Dorsolateral prefrontal cortex (tissue), 120 donors: ENCODE measurements at regions of chr3 and their contacts with region 1.

Region 1: GRCh38 chr3:40179016-40179415 is 130.5 kb upstream of the EIF1B start:
- DNase-seq: peak; percentile 82 to 96 (median 86)
- H3K4me3 ChIP-seq: no peak overlapping the region
- H3K27ac ChIP-seq: peak overlapping the region in 54 of 59 donors; percentile 4 to 85 (median 64)
- H3K27me3 ChIP-seq: no peaks in the 10 kb centered on the region
- CTCF ChIP-seq: peak; percentile 66 to 97 (median 90)

Region 2: GRCh38 chr3:39541917-39542329 is 637.1 kb before region 1 on chr3:
- intact Hi-C with region 1: loop called (anchors 5 kb)
- DNase-seq: no peak
- H3K4me3 ChIP-seq: peak overlapping the region in 57 of 59 donors; percentile 1 to 63 (median 41)
- H3K27ac ChIP-seq: peak overlapping the region in 22 of 59 donors; percentile 2 to 63 (median 26)
- H3K27me3 ChIP-seq: no peaks in the 10 kb centered on the region
- CTCF ChIP-seq: peak; percentile 55 to 85 (median 72)

Region 3: DNA sequence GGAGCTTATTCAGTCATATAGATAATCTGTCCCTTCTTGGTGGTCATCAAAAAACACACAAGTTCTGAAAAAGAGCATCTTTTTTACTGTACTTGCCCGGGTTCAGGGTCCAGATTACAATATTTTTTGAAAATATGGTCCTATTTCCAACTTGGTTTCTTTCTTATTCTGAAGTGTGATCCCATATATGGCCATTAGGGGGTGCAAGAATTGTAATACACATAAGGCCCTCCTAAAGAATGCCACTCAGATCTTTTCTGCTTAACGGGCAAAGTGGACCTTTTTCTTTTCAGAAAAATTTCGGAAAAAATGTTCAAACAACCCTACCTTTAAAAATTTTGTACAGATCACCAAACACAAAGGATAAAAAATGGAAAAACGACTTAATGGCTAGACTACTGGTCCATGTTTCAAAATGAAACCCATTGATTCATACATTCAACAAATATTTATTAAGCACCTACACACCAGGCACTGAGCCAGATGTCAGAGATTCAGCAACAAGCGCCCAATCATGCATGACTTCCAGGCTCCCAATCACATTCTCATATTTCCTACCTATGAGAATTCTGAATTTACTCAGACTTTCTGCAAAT is 471.6 kb before region 1 on chr3:
- intact Hi-C with region 1: loop called in 1 of 2 experiments (anchors 5 kb)
- DNase-seq: no peak
- H3K4me3 ChIP-seq: no peak overlapping the region
- H3K27ac ChIP-seq: no peak overlapping the region
- H3K27me3 ChIP-seq: no peaks in the 10 kb centered on the region
- CTCF ChIP-seq: peak; percentile 51 to 85 (median 68)

Region 4: DNA sequence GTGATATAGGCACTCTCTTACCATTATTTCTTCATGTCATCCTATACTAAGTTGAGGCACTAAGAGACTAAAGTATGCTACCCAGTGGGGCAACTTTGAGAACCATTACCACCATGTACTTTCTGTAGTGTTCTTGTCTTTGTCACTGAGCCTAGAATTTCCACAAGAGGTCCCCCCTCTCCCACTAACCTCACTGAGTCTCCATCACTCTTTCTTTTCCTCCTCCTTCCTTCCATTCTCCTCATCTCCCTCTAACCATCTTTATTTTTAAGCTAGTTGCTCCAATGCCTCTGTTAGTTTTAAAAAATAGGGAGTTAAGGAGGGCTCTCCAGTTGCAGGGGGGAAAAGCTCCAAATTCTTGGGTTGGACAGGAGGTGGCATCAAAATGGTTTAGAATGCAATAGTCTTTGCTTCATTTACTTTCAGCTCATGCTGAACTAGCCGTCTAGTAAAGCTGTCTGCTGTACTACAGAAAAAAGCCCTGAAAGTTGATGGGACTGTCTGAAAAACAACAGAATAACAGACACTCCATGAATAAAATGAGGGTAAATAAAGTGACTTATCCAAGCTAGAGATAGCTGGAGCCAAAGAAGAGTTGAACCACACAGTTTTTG is 454.7 kb before region 1 on chr3:
- intact Hi-C with region 1: loop called (anchors 5 to 10 kb)
- DNase-seq: peak in 1 of 10 donors; percentile 11
- H3K4me3 ChIP-seq: no peak overlapping the region
- H3K27ac ChIP-seq: no peak overlapping the region
- H3K27me3 ChIP-seq: no peaks in the 10 kb centered on the region
- CTCF ChIP-seq: peak in 49 of 56 donors; percentile 11 to 73 (median 41)

Region 5: DNA sequence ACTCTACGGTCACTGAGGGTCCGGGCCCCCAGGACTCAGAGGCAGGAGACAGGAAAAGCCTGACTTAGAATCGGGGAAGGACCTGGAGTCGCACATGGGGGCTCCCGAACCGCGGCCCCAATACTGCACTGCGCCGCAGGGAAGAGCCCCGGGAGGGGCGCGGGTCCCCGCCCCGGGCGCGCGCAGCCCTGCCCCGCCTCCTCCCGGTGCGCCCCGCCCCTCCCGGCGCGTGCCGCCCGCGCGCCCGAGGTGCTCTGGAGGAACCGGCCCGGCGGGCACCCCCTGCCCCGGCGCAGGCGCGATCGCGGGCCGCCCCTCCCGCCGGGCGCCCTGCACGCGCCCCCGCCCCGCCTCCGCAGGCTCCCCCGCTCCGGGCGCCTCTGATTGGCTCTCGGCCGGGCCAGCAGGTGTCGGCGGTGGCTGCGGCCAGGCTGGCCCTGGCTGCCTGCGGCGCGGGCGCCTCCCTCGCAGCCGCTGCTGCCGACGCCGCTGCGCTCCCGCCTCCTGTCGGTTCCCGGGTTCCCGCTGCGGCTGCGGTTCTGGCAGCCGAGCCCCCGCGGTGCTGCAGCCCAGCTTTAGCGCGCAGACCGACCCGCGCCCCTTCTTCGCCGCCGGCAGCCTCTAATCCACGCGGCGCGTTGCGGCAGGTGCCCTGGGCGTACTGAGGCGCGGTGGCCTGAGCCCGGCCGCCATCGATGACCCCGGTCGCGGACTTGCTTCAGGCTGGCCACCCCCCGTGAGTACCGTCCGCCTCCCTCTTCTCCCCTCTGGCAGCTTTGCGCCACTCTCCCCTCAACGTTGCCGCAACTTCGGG is 369.6 kb before region 1 on chr3 and contains the start of gene MYRIP:
- intact Hi-C with region 1: loop called (anchors 5 kb)
- DNase-seq: peak; percentile 41 to 83 (median 65)
- H3K4me3 ChIP-seq: peak within 1 kb of the TSS; percentile 59 to 93 (median 78)
- H3K27ac ChIP-seq: peak within 1 kb of the TSS in 58 of 59 donors; percentile 33 to 94 (median 82)
- H3K27me3 ChIP-seq: peaks cover 0 to 3% (median 0%) of the 10 kb centered on the region in 45 donors
- CTCF ChIP-seq: peak in 20 of 56 donors; percentile 6 to 46 (median 22)
- total RNA-seq, gene MYRIP: 23.2 to 68.4 (median 47.6) TPM

Region 6: GRCh38 chr3:39937874-39938273 is 241.1 kb before region 1 on chr3:
- intact Hi-C with region 1: loop called in 1 of 2 experiments (anchors 5 kb)
- DNase-seq: no peak
- H3K4me3 ChIP-seq: peak overlapping the region in 2 of 59 donors; percentile 5 to 9
- H3K27ac ChIP-seq: peak overlapping the region in 57 of 59 donors; percentile 3 to 94 (median 72)
- H3K27me3 ChIP-seq: no peaks in the 10 kb centered on the region
- CTCF ChIP-seq: no peak

Region 7: GRCh38 chr3:40120806-40121205 is 58.2 kb before region 1 on chr3:
- intact Hi-C with region 1: loop called (anchors 1 to 10 kb)
- DNase-seq: no peak
- H3K4me3 ChIP-seq: no peak overlapping the region
- H3K27ac ChIP-seq: peak overlapping the region in 14 of 59 donors; percentile 1 to 52 (median 28)
- H3K27me3 ChIP-seq: no peaks in the 10 kb centered on the region
- CTCF ChIP-seq: no peak

Region 8: DNA sequence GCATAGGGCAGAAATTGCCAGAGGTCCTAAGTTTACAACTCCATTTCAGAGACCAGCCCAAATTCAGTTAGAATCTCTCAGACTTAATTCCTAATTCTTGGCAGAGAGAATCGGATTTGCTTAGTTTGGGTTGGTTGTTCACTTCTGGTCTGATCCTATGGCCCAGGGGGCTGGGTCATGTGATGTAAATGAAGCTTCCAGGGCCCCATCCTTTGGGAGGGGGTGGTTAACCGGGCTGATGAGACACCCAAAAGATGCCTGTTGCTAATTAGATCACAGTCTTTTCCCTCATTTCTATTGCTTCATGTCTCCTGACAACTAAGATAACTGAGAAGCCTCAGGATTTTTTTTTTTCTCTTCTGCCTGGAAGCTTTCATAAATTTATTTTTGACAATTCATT is 315.7 kb after region 1 on chr3:
- intact Hi-C with region 1: no loop called
- DNase-seq: no peak
- H3K4me3 ChIP-seq: no peak overlapping the region
- H3K27ac ChIP-seq: no peak overlapping the region
- H3K27me3 ChIP-seq: no peaks in the 10 kb centered on the region
- CTCF ChIP-seq: no peak